Transverse colon (tissue), 4 donors: ENCODE measurements at regions of chr12 and their contacts with region 1.

Region 1: GRCh38 chr12:57674691-57675090 is 19.2 kb upstream of the OS9 start:
- DNase-seq: no peak
- H3K4me3 ChIP-seq: no peak overlapping the region
- H3K27ac ChIP-seq: no peak overlapping the region
- H3K4me1 ChIP-seq: no peaks in the 10 kb centered on the region
- H3K27me3 ChIP-seq: no peaks in the 10 kb centered on the region
- CTCF ChIP-seq: no peak
- EP300 ChIP-seq: no peak
- POLR2A ChIP-seq: no peak

Region 2: DNA sequence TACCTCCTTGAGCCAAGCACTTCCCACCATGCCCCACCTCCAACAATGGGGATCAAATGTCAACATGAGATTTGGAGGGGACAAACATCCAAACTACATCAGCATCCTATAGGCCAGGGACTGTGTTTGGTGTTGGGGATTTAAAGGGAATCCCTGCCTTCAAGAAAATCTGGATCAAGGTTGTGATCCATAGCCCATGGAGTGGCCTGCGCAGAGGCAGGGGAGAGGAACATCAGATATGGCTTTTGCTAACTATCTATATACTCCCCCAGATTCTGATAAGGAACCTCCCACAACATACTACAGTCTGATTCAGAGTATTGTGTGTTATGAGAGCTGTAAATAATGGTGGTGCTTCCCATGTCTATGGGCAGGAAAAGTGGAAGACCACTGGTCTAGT is 119.8 kb before region 1 on chr12:
- in situ Hi-C with region 1: no loop called
- intact Hi-C with region 1: loop called (anchors 5 kb)
- DNase-seq: no peak
- H3K4me3 ChIP-seq: no peak overlapping the region
- H3K27ac ChIP-seq: no peak overlapping the region
- H3K4me1 ChIP-seq: peaks cover 0 to 5% (median 4%) of the 10 kb centered on the region in 4 donors
- H3K27me3 ChIP-seq: peaks cover 24% of the 10 kb centered on the region
- CTCF ChIP-seq: no peak
- EP300 ChIP-seq: no peak
- POLR2A ChIP-seq: no peak